OCI-LY7 (cell line): ENCODE measurements at regions of chr3 and their contacts with region 1.

Region 1: GRCh38 chr3:12648384-12648959 is 15.4 kb downstream of the RAF1 start:
- DNase-seq: peak; percentile 58
- H3K4me3 ChIP-seq: no peak overlapping the region
- H3K27ac ChIP-seq: no peak overlapping the region
- H3K4me1 ChIP-seq: peaks cover 18% of the 10 kb centered on the region
- CTCF ChIP-seq: no peak

Region 2: GRCh38 chr3:12405432-12406272 is 242.8 kb before region 1 on chr3:
- CTCF ChIA-PET with region 1: no interaction called
- POLR2A ChIA-PET with region 1: no interaction called
- intact Hi-C with region 1: no loop called
- DNase-seq: no peak
- H3K4me3 ChIP-seq: no peak overlapping the region
- H3K27ac ChIP-seq: no peak overlapping the region
- H3K4me1 ChIP-seq: no peaks in the 10 kb centered on the region
- CTCF ChIP-seq: no peak

Region 3: GRCh38 chr3:12658593-12659058 is 10.2 kb after region 1 on chr3:
- CTCF ChIA-PET with region 1: no interaction called
- POLR2A ChIA-PET with region 1: interaction called, 22 read pairs
- intact Hi-C with region 1: no loop called
- DNase-seq: no peak
- H3K4me3 ChIP-seq: no peak overlapping the region
- H3K27ac ChIP-seq: no peak overlapping the region
- H3K4me1 ChIP-seq: peaks cover 26% of the 10 kb centered on the region
- CTCF ChIP-seq: no peak

Region 4: GRCh38 chr3:12716605-12717151 is 68.2 kb after region 1 on chr3:
- CTCF ChIA-PET with region 1: no interaction called
- POLR2A ChIA-PET with region 1: no interaction called
- intact Hi-C with region 1: no loop called
- DNase-seq: peak; percentile 56
- H3K4me3 ChIP-seq: no peak overlapping the region
- H3K27ac ChIP-seq: no peak overlapping the region
- H3K4me1 ChIP-seq: peaks cover 21% of the 10 kb centered on the region
- CTCF ChIP-seq: no peak

Region 5: GRCh38 chr3:13141991-13142412 is 493.5 kb after region 1 on chr3:
- CTCF ChIA-PET with region 1: no interaction called
- POLR2A ChIA-PET with region 1: no interaction called
- intact Hi-C with region 1: no loop called
- DNase-seq: peak; percentile 43
- H3K4me3 ChIP-seq: no peak overlapping the region
- H3K27ac ChIP-seq: no peak overlapping the region
- H3K4me1 ChIP-seq: no peaks in the 10 kb centered on the region
- CTCF ChIP-seq: no peak